HepG2 (cell line): ENCODE measurements at regions of chr21 and their contacts with region 1.

Region 1: DNA sequence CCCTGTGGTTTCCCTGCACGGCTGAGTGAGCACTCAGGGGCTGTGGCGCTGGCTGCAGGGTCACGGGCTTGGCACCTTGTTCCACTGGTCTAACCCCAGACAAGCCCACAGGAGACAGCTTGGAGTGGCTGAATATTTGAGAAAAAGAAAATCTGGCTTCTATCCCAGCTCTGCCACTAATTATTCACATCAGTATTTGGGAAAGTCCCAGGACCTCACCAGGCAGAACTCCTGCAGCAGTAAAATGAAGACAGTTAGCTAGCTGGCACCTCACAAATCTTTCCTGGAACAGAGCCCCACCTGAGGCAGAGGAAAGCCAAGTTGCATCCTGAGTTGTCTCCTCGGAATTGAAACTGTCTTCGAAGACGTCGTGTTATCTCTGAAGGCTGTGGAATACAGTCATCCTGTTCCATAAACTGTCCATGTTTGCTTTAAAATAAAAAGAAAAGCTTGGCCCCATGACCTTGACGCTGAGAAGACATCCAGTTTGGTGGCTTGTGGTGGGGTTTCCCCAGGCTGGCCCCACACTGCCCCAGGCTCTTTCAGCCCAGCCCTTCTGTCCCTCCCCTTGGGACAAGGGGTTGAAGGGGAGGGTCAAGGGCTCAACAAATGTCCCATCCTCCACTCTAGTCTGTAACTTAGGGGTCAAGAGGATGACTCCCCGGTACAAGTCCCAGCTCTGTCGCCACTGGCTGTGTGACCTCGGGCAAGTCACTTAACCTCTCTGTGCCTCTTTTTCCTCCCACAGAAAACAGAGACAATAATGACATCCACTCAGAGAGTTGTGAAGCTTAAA is 93.8 kb upstream of the TMPRSS2 start:
- DNase-seq: no peak
- ATAC-seq: no peak
- H3K4me3 ChIP-seq: no peak overlapping the region
- H3K27ac ChIP-seq: no peak overlapping the region
- H3K4me1 ChIP-seq: peaks cover 54% of the 10 kb centered on the region
- H3K27me3 ChIP-seq: peaks cover 0 to 1% of the 10 kb centered on the region in 2 experiments; a peak in 1 of 5 replicates
- CTCF ChIP-seq: no peak
- EP300 ChIP-seq: no peak
- POLR2A ChIP-seq: no peak
- RAD21 ChIP-seq: no peak

Region 2: GRCh38 chr21:41477641-41478318 is 124.0 kb before region 1 on chr21:
- CTCF ChIA-PET with region 1: no interaction called
- POLR2A ChIA-PET with region 1: no interaction called
- in situ Hi-C with region 1: no loop called
- intact Hi-C with region 1: loop called (anchors 5 kb)
- DNase-seq: no peak
- ATAC-seq: peak; percentile 43
- H3K4me3 ChIP-seq: no peak overlapping the region
- H3K27ac ChIP-seq: no peak overlapping the region
- H3K4me1 ChIP-seq: peaks cover 23% of the 10 kb centered on the region
- H3K27me3 ChIP-seq: no peaks in the 10 kb centered on the region
- CTCF ChIP-seq: no peak
- EP300 ChIP-seq: no peak
- POLR2A ChIP-seq: no peak
- RAD21 ChIP-seq: no peak

Region 3: DNA sequence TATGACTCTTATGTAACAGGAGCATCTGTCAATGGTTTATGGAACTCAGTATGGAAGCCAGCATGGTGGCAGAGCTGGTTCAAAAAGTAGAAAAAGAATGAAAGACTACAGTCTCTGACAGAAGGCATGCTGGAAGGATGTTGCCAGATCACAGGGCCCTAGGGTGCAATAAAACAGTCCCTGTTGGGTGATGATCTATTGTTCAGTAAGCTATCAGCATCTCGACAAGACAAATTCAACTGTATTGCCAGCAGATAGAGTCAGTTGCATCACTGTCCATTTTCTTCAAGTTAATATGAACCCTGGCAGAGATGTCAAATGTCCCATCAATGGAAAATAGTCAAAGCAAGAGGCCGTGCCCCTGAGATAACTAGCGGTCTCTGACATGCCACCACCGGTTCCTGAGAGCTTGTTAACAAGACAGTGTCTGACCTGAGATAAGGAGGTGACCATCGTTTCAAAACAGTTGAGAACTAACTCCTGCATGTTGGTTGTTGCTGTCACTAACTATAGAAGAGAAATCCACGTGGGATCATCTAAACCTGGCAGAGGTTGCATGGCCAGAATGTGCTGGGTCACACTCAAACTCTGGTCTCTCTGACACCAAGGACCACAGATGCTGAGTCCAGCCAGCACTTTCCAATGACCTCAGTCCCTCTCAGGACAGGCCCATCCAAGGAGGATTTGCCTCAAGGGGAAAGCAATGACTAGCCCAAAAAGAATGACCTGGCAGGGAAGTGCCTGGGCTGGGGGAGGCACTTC is 39.2 kb after region 1 on chr21:
- CTCF ChIA-PET with region 1: no interaction called
- POLR2A ChIA-PET with region 1: no interaction called
- in situ Hi-C with region 1: no loop called
- intact Hi-C with region 1: no loop called
- DNase-seq: no peak
- ATAC-seq: no peak
- H3K4me3 ChIP-seq: no peak overlapping the region
- H3K27ac ChIP-seq: no peak overlapping the region
- H3K4me1 ChIP-seq: peaks cover 18% of the 10 kb centered on the region
- H3K27me3 ChIP-seq: peaks cover 0 to 8% of the 10 kb centered on the region in 2 experiments; a peak in 2 of 5 replicates
- CTCF ChIP-seq: no peak
- EP300 ChIP-seq: no peak
- POLR2A ChIP-seq: no peak
- RAD21 ChIP-seq: no peak